Activated T-helper 1 cell treated with anti-CD3 and anti-CD28 coated beads, Interleukin-12 subunit alpha, Interleukin-12 subunit beta, Interleukin-2, Interleukin-4 antibody, amounts not matched to agents 30 ng/mL and 10 ng/mL and 1 ng/mL, durations not matched to agents 14 hours and 24 hours and 36 hours (primary cell): ENCODE measurements at regions of chr4 and their contacts with region 1.

Region 1: GRCh38 chr4:114386637-114387233 is 211.9 kb upstream of the UGT8 start:
- DNase-seq: no peak
- H3K4me3 Mint-ChIP-seq: no peak overlapping the region
- H3K27ac Mint-ChIP-seq: no peak overlapping the region
- H3K4me1 Mint-ChIP-seq: no peaks in the 10 kb centered on the region
- H3K27me3 Mint-ChIP-seq: peaks cover 2% of the 10 kb centered on the region

Region 2: GRCh38 chr4:113278324-113278934 is 1108.3 kb before region 1 on chr4:
- intact Hi-C with region 1: loop called (anchors 1 kb)
- DNase-seq: peak; percentile 31
- H3K4me3 Mint-ChIP-seq: no peak overlapping the region
- H3K27ac Mint-ChIP-seq: no peak overlapping the region
- H3K4me1 Mint-ChIP-seq: no peaks in the 10 kb centered on the region
- H3K27me3 Mint-ChIP-seq: peaks cover 6% of the 10 kb centered on the region

Region 3: DNA sequence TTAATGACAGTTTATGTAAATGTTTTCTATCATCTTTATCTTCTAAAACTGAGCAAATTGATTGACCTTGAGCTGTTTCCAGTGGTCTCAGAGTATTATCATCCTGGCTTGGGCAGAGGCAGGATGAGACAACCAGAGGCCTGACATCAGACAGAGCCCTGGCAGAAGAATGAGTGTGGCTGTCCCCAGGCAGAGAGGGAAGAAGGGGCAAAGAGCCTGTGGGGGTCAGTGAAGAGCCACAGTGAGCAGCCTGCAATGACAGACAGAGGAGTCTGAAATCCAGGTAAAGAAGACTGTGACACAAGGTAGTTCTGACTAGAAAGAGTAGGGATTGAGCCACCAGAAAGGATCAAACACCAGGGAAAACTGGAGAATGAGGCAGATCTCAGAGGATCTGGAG is 224.9 kb before region 1 on chr4:
- intact Hi-C with region 1: no loop called
- DNase-seq: no peak
- H3K4me3 Mint-ChIP-seq: no peak overlapping the region
- H3K27ac Mint-ChIP-seq: no peak overlapping the region
- H3K4me1 Mint-ChIP-seq: no peaks in the 10 kb centered on the region
- H3K27me3 Mint-ChIP-seq: no peaks in the 10 kb centered on the region

Region 4: GRCh38 chr4:114659386-114660008 is 272.8 kb after region 1 on chr4:
- intact Hi-C with region 1: loop called (anchors 1 kb)
- DNase-seq: no peak
- H3K4me3 Mint-ChIP-seq: no peak overlapping the region
- H3K27ac Mint-ChIP-seq: no peak overlapping the region
- H3K4me1 Mint-ChIP-seq: no peaks in the 10 kb centered on the region
- H3K27me3 Mint-ChIP-seq: peaks cover 5% of the 10 kb centered on the region

Region 5: GRCh38 chr4:114694770-114695169 is 308.0 kb after region 1 on chr4:
- intact Hi-C with region 1: loop called (anchors 1 kb)
- DNase-seq: no peak
- H3K4me3 Mint-ChIP-seq: no peak overlapping the region
- H3K27ac Mint-ChIP-seq: no peak overlapping the region
- H3K4me1 Mint-ChIP-seq: peaks cover 8% of the 10 kb centered on the region
- H3K27me3 Mint-ChIP-seq: no peaks in the 10 kb centered on the region